Endothelial cell of umbilical vein (primary cell): ENCODE measurements at regions of chr19 and their contacts with region 1.

Region 1: GRCh38 chr19:14117668-14118164 is at the start of gene PRKACA:
- DNase-seq: peak; percentile 99
- H3K4me3 ChIP-seq: peak within 1 kb of the TSS; percentile 67 to 84 (median 80)
- H3K27ac ChIP-seq: peak within 1 kb of the TSS; percentile 94
- H3K4me1 ChIP-seq: peaks cover 25% of the 10 kb centered on the region
- H3K27me3 ChIP-seq: no peaks in the 10 kb centered on the region
- CTCF ChIP-seq: no peak
- POLR2A ChIP-seq: no peak
- total RNA-seq, gene PRKACA: 97.5 and 110 TPM in 2 replicates

Region 2: DNA sequence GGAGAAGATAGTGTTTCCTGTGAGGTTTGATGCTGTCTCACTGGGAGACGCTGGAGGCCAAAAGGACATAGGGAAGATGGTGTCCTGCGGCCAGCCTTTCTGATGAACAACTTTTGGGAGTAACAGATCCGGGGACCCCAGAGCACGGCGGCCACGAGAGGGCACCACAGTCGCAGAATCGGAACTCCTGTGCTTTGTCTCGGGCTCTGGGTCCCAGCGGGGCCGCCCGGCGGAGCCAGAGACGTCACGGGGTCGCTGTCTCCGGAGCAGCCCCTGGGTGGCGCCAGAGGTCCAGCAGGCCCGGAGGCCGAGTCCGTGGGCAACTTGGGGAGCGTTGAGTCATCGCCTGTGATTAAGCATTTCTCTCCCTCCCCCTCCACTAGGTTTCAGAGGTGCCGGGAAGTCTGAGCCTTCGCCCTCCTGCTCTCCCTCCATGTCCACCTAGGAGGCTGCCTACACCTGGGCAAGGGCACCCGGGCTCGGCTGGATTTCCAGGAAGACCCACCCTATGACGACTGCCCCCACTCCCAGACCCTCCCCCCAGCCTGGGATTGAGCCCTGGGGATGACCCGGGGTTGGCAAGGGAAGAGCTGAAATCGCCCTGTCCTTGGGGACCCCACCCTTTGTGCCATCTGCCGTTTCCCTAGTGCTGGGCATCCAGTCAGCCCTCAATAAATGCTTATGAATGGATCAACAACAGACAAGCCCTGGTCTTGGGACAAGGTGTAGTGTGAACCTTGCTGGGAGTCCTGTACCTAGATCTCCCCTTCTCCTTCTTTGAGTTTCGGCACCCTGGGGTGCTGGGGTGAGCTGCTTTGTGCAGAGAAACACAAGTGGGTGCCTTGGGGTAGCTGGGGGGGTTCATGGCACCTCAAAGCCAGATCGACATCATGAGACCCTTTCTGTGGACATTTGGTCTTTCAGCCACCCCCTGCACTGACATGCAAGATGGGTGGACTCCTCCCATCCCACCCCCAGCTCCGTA is 237.4 kb before region 1 on chr19:
- CTCF ChIA-PET with region 1: interaction called, 4 read pairs
- POLR2A ChIA-PET with region 1: no interaction called
- dilution Hi-C with region 1: no loop called
- intact Hi-C with region 1: loop called (anchors 1 kb)
- DNase-seq: peak; percentile 96
- H3K4me3 ChIP-seq: peak overlapping the region in 1 of 3 experiments; percentile 4
- H3K27ac ChIP-seq: peak overlapping the region; percentile 78
- H3K4me1 ChIP-seq: peaks cover 5% of the 10 kb centered on the region
- H3K27me3 ChIP-seq: no peaks in the 10 kb centered on the region
- CTCF ChIP-seq: peak; percentile 100
- POLR2A ChIP-seq: no peak

Region 3: GRCh38 chr19:14048443-14049153 is 69.1 kb before region 1 on chr19:
- CTCF ChIA-PET with region 1: no interaction called
- POLR2A ChIA-PET with region 1: no interaction called
- dilution Hi-C with region 1: no loop called
- intact Hi-C with region 1: no loop called
- DNase-seq: peak; percentile 35
- H3K4me3 ChIP-seq: no peak overlapping the region
- H3K27ac ChIP-seq: no peak overlapping the region
- H3K4me1 ChIP-seq: no peaks in the 10 kb centered on the region
- H3K27me3 ChIP-seq: no peaks in the 10 kb centered on the region
- CTCF ChIP-seq: peak; percentile 83 to 91
- POLR2A ChIP-seq: no peak

Region 4: GRCh38 chr19:14081325-14082093 is 36.2 kb before region 1 on chr19:
- CTCF ChIA-PET with region 1: interaction called, 8 read pairs
- POLR2A ChIA-PET with region 1: interaction called, 3 read pairs
- dilution Hi-C with region 1: no loop called
- intact Hi-C with region 1: loop called (anchors 2 kb)
- DNase-seq: peak; percentile 100
- H3K4me3 ChIP-seq: peak overlapping the region; percentile 59 to 77 (median 69)
- H3K27ac ChIP-seq: peak overlapping the region; percentile 66
- H3K4me1 ChIP-seq: peaks cover 12% of the 10 kb centered on the region
- H3K27me3 ChIP-seq: no peaks in the 10 kb centered on the region
- CTCF ChIP-seq: no peak
- POLR2A ChIP-seq: peak; percentile 97

Region 5: GRCh38 chr19:14091081-14091812 is 26.5 kb before region 1 on chr19:
- CTCF ChIA-PET with region 1: interaction called, 5 read pairs
- POLR2A ChIA-PET with region 1: no interaction called
- dilution Hi-C with region 1: no loop called
- intact Hi-C with region 1: loop called (anchors 2 kb)
- DNase-seq: peak; percentile 66
- H3K4me3 ChIP-seq: peak overlapping the region; percentile 52 to 94 (median 86)
- H3K27ac ChIP-seq: peak overlapping the region; percentile 65
- H3K4me1 ChIP-seq: peaks cover 9% of the 10 kb centered on the region
- H3K27me3 ChIP-seq: no peaks in the 10 kb centered on the region
- CTCF ChIP-seq: peak in 1 of 2 donors; percentile 27
- POLR2A ChIP-seq: no peak